Heart right ventricle (tissue), 16 donors: ENCODE measurements at regions of chr3 and their contacts with region 1.

Region 1: DNA sequence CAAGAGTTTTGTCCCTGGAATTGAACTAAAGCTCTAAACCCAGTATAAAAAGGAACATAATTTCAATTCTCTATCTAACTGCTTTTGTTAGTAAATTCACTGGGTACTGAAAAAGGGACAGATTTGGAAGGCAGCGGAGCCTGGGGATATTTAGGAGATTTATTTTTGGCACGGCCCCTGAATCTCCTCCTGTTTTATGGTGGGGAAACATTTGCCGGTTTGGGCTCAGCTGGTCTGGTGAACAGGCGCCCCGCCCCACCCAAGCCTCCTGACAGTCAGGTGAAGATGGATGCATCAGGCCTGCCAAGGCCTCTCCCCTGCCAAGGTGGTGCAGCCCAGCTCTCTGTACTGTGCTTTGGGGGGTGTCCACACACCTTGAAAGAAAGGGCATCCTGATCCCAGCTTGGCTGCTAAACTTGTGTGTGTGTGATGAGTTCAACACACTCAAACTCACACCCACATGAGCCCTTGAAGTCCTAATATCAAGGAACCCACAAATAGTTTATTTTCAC is 46.3 kb downstream of the EBLN2 start:
- DNase-seq: no peak
- ATAC-seq: no peak
- H3K4me3 ChIP-seq: no peak overlapping the region
- H3K27ac ChIP-seq: no peak overlapping the region
- H3K4me1 ChIP-seq: no peaks in the 10 kb centered on the region
- H3K27me3 ChIP-seq: no peaks in the 10 kb centered on the region
- CTCF ChIP-seq: no peak

Region 2: DNA sequence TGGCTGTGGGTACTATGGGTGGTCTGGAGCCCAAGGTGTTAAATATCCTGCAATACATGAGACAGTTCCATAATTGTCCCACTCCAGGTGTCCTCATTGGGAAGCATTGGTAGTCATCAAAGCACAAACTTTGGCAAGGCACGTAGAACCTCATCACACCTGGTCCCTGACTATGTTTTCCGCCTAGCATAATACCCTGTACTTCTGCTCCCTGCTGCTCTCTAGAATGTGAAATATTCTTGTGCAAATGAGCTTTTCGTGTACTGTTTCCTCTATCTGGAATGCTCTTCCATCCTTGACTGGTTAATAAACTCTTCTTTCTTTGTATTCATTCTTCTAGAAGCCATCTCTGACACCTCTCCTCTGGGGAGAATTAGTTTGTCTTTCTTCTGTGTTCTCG is 56.9 kb after region 1 on chr3:
- intact Hi-C with region 1: no loop called
- DNase-seq: no peak
- ATAC-seq: no peak
- H3K4me3 ChIP-seq: no peak overlapping the region
- H3K27ac ChIP-seq: no peak overlapping the region
- H3K4me1 ChIP-seq: no peaks in the 10 kb centered on the region
- H3K27me3 ChIP-seq: no peaks in the 10 kb centered on the region
- CTCF ChIP-seq: no peak

Region 3: GRCh38 chr3:73437828-73438227 is 330.1 kb after region 1 on chr3:
- intact Hi-C with region 1: loop called in 9 of 10 experiments (anchors 2 to 10 kb)
- DNase-seq: no peak
- ATAC-seq: peak in 2 of 8 donors; percentile 35 to 36
- H3K4me3 ChIP-seq: no peak overlapping the region
- H3K27ac ChIP-seq: no peak overlapping the region
- H3K4me1 ChIP-seq: peaks cover 0 to 37% (median 12%) of the 10 kb centered on the region in 9 donors
- H3K27me3 ChIP-seq: no peaks in the 10 kb centered on the region
- CTCF ChIP-seq: no peak